ENCODE measurements at regions of chr13 and their contacts with region 1.

Region 1: GRCh38 chr13:20828539-20829364 is 55.0 kb upstream of the EEF1AKMT1 start:
- DNase-seq: peak in 3 of 4 donors; percentile 12 to 23 (median 17)
- ATAC-seq: peak; percentile 73
- H3K4me3 ChIP-seq: no peak overlapping the region
- H3K27ac ChIP-seq: no peak overlapping the region
- H3K4me1 ChIP-seq: no peaks in the 10 kb centered on the region
- H3K27me3 ChIP-seq: no peaks in the 10 kb centered on the region
- CTCF ChIP-seq: peak; percentile 44 to 84 (median 76)
- POLR2A ChIP-seq: no peak

Region 2: DNA sequence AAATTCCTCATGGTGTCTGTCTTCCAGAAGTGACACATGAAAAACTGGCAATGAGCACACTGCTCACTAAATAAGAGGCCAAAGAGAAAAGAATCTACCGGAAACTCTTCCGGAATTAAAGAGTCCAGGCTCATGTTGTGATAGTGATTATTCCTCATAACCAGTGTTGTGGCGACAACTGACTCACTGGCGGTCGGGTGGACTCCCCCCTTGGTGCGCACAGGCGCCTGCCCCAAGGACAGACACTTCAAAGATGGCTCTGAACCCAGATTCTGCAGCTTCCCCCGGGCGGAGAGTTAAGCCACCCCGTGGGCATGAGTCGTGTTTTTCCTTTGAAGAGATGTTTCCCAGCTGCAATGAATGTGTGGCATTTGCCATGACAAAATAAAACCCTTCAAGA is 115.0 kb before region 1 on chr13:
- intact Hi-C with region 1: loop called (anchors 10 kb)
- DNase-seq: no peak
- ATAC-seq: no peak
- H3K4me3 ChIP-seq: no peak overlapping the region
- H3K27ac ChIP-seq: no peak overlapping the region
- H3K4me1 ChIP-seq: peaks cover 14% of the 10 kb centered on the region
- H3K27me3 ChIP-seq: no peaks in the 10 kb centered on the region
- CTCF ChIP-seq: no peak
- POLR2A ChIP-seq: no peak

Region 3: DNA sequence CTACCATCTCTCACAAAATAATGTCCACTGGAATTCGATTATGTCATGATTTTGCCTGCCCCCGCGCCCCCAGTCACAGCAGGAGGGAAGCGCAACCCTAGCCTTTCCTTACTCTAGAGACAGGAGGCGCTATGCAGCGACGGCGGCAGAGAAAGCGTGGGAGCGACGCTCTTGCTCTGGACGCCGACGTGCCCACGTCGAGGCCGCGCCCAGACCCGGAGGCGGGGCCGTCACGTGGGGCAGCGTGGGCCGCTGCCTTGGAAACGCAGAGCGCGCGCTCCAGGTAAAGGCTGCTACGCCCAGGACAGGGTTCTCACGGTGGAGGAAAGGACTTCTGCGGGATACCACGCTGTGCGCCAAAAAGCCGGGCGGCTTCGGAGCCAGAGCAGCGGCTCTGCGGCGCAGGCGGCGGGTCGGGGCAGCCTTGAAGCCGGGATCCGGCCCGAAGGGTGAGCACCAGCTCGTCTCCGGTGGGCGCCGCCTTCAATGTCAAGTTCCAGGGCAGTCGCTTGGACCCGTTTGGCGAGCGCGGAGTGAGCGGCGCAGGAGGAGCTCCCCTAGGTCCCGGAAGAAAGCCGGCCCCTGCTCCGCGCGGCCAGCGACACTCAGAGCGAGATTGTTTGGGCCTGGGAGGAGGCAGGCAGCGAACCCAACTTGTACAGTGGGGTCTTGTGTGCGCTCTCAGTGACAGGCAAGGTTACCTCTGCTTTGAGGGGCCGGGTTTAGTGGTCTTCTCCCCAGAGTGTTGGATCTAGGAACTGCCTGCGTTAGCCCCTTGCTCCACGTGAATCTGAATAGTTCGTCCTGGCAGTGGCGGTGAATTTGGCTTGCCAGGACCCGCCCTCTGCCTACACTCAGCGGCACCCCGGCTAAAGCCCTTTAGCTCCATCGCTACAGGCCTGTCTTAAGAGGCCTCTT is 469.4 kb after region 1 on chr13:
- intact Hi-C with region 1: no loop called
- DNase-seq: peak; percentile 86 to 90 (median 88)
- ATAC-seq: peak; percentile 98
- H3K4me3 ChIP-seq: peak overlapping the region; percentile 91 to 92
- H3K27ac ChIP-seq: peak overlapping the region; percentile 56 to 84 (median 72)
- H3K4me1 ChIP-seq: peaks cover 21% of the 10 kb centered on the region
- H3K27me3 ChIP-seq: no peaks in the 10 kb centered on the region
- CTCF ChIP-seq: peak; percentile 81 to 99 (median 93)
- POLR2A ChIP-seq: peak; percentile 31 to 58 (median 57)

Measured in body of pancreas (tissue), 4 donors.